ENCODE measurements at regions of chr14 and their contacts with region 1.

Region 1: DNA sequence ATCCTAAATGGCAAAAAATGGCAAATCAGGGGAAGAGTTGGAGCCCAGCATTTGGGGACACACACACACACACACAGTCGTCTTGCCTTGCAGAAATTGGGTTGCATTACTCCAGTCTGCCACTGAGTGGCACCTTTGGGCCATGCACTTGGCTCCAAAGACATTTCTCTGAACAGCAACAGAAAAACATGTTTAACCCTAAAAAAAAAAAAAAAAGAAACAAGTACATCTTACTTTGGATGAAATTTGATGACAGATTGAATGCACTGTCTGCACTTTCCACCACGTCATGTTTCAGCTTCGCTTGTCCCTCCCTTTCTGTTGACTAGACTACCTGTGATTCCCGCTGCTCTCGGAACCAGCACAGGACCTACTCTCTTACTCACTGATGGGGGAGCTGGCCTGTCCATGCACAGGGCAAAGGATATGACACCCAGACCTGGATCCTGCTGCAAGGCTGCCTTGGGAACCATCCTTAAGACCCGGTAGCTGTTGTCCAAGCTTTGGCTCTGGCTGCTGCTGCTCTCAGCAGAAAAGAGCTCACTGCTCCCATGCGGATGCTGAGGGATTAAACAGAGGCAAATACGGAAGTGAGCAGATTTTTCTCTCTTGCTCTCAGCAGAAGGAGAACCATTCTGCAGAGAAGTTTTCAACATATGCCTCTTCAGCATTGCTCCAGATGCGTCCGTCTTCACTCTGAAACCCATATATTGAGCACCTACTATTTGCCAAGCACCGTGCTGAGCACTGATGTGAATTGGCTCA is 376.8 kb downstream of the DPF3 start:
- DNase-seq: peak; percentile 88
- ATAC-seq: peak; percentile 27
- H3K4me3 Mint-ChIP-seq: peak overlapping the region; percentile 26
- H3K27ac Mint-ChIP-seq: peak overlapping the region; percentile 93
- H3K4me1 Mint-ChIP-seq: peaks cover 93% of the 10 kb centered on the region
- H3K27me3 Mint-ChIP-seq: peaks cover 4% of the 10 kb centered on the region

Region 2: GRCh38 chr14:72443991-72444441 is 73.1 kb before region 1 on chr14:
- CTCF ChIA-PET with region 1: interaction called, 11 read pairs
- POLR2A ChIA-PET with region 1: interaction called, 4 read pairs
- DNase-seq: peak; percentile 82
- ATAC-seq: peak; percentile 34
- H3K4me3 Mint-ChIP-seq: peak overlapping the region; percentile 54
- H3K27ac Mint-ChIP-seq: peak overlapping the region; percentile 85
- H3K4me1 Mint-ChIP-seq: peaks cover 87% of the 10 kb centered on the region
- H3K27me3 Mint-ChIP-seq: no peaks in the 10 kb centered on the region

Region 3: GRCh38 chr14:72498646-72499045 is 18.5 kb before region 1 on chr14:
- CTCF ChIA-PET with region 1: interaction called, 22 read pairs
- POLR2A ChIA-PET with region 1: interaction called, 3 read pairs
- DNase-seq: no peak
- ATAC-seq: no peak
- H3K4me3 Mint-ChIP-seq: no peak overlapping the region
- H3K27ac Mint-ChIP-seq: no peak overlapping the region
- H3K4me1 Mint-ChIP-seq: peaks cover 2% of the 10 kb centered on the region
- H3K27me3 Mint-ChIP-seq: peaks cover 40% of the 10 kb centered on the region

Region 4: DNA sequence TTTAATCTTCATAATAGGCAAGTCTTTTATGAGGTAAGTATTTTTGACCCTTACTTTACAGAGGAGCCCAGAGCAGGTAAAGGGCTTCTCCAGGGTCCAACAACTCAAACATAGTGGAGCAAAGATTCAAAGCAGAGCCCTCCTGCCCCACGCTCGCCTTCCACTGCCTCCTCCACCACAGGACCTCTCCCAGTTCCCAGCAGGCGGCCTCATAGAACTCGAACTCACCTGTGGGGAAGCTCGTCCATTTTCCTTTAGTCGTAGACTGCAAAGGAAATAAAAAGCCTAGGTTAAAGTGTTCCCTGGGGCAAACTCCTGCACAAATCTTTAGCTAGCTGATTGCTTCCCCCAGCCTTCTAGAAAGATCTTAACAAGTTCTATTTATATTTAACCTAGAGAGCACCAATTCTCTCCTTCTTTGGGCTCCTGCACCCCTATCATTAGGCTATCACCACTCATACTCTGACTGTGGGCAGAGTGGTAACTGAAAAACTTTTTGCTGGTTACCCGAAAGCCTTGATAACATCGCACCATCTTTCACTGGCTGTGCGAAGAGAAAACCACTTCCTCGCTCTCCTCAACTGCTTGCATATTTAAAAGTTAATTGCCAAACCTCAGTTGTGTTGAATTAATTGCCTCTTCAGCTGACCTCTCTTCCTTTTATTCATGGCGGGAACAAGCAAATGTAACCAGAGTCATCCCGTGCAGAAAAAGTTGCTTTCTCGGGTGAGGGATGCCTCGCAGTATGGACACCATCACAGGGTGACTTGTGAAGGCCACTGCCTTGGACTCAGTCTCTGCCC is 77.2 kb after region 1 on chr14:
- CTCF ChIA-PET with region 1: interaction called, 12 read pairs
- POLR2A ChIA-PET with region 1: no interaction called
- DNase-seq: peak; percentile 86
- ATAC-seq: peak; percentile 92
- H3K4me3 Mint-ChIP-seq: peak overlapping the region; percentile 62
- H3K27ac Mint-ChIP-seq: peak overlapping the region; percentile 87
- H3K4me1 Mint-ChIP-seq: peaks cover 78% of the 10 kb centered on the region
- H3K27me3 Mint-ChIP-seq: peaks cover 21% of the 10 kb centered on the region

Region 5: DNA sequence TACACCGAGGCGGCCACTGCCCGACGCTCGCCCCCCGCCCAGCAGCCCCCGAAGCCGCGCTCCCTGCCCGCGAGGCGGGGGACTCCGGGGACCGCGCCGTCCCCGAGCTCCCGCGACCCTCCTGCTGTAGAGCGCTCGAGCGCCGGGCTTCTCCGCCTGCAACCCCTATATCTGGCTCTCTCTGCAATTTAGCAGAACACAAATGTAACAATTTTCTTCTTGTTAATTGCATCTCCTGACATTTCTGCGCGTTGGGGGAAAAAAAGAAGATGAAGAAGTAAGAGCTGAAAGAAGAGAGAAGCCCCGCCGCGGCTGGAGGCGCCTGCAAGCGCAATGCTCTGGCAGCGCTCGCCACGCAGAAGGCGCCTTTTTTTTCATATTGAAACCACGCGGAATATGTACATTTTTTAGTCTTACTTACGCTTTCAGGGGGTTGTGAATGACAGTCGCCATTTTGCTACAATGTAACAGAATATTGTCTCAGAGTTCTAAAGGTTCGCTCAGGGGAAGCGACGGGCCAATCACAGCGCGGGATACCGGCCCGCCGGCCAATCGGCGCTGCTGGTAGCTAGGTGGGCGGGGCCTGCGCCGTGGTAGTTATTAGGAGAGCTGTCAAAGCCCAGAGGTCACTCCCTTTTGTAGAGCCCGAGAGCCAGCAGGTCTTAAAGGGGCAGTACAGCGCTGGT is 376.7 kb after region 1 on chr14 and contains the start of gene DPF3:
- CTCF ChIA-PET with region 1: interaction called, 22 read pairs
- POLR2A ChIA-PET with region 1: no interaction called
- DNase-seq: peak; percentile 97
- ATAC-seq: peak; percentile 98
- H3K4me3 Mint-ChIP-seq: peak within 1 kb of the TSS; percentile 97
- H3K27ac Mint-ChIP-seq: peak within 1 kb of the TSS; percentile 76
- H3K4me1 Mint-ChIP-seq: peaks cover 37% of the 10 kb centered on the region
- H3K27me3 Mint-ChIP-seq: peaks cover 56% of the 10 kb centered on the region
- total RNA-seq, gene DPF3: 10.3 to 10.7 TPM

Region 6: DNA sequence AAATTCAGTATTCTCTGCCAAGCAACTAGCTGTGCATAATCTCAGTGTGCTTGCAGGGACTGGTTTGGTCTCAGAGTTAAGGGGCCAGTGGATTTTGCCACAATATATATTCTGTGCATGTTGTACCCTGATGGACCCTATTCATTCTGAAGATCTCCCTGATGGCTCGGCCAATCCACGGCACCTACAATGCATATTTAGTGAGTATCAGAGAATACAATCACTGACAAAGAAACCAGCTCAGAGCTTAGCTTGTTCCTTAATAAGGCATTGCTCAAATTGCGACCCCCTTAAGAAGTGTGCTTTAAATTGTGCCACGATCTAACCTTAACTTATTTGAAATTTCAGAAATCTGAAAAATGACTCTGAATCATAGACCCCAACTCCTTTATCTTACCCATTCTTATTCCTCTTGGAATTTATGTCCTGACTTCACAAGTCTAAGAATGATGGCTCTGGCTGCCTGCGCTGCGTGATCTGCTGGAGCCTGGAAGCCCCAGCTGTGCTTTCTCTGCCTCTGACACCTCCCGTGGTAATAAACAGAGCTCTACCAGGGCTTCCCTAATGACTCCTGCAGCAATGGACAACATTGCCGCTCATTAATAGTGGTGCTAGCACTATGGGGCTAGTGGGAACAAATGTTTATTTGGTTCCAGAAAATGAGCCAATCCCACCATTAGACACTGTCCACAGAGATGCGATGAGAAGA is 400.1 kb after region 1 on chr14:
- CTCF ChIA-PET with region 1: interaction called, 10 read pairs
- POLR2A ChIA-PET with region 1: no interaction called
- DNase-seq: no peak
- ATAC-seq: no peak
- H3K4me3 Mint-ChIP-seq: no peak overlapping the region
- H3K27ac Mint-ChIP-seq: no peak overlapping the region
- H3K4me1 Mint-ChIP-seq: peaks cover 6% of the 10 kb centered on the region
- H3K27me3 Mint-ChIP-seq: peaks cover 44% of the 10 kb centered on the region

Region 7: DNA sequence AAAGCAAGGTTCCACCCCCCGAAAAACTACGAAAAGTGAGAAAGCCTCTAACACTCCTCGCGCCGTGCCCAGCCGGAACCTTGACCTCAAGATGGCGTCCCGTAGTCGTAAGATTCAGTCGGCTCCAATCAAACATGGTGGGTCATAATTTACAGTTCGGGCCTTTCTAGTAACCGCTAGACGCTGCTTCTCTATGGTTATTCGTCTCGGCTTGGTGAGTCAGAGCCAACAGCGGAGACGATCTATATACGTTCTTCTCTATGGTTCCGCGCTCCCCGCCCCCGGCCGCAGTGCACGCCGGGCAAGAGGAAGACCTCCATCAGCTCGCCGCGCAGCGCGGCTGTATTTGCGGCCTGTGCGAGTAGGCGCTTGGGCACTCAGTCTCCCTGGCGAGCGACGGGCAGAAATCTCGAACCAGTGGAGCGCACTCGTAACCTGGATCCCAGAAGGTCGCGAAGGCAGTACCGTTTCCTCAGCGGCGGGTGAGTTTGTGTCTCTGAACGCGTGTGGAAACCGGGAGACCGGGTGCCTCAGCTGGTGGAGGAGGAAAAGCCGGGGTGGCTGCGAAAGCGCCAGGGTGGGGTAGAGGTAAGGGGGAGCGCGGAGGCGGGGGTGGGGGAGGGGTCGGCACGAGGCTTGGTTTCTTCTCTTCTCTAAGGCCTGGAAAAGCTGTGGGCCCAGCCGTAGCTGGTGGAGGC is 541.3 kb after region 1 on chr14 and contains the start of gene RBM25:
- CTCF ChIA-PET with region 1: interaction called, 10 read pairs
- POLR2A ChIA-PET with region 1: no interaction called
- DNase-seq: peak; percentile 98
- ATAC-seq: peak; percentile 97
- H3K4me3 Mint-ChIP-seq: no peak within 1 kb of the TSS
- H3K27ac Mint-ChIP-seq: no peak within 1 kb of the TSS
- H3K4me1 Mint-ChIP-seq: peaks cover 39% of the 10 kb centered on the region
- H3K27me3 Mint-ChIP-seq: peaks cover 3% of the 10 kb centered on the region
- total RNA-seq, gene RBM25: 89.5 to 95.1 TPM